ENCODE measurements at regions of chr2 and their contacts with region 1.

Region 1: GRCh38 chr2:111986116-111986900 is 68.8 kb upstream of the TMEM87B start:
- DNase-seq: no peak
- ATAC-seq: no peak
- H3K4me3 ChIP-seq: no peak overlapping the region
- H3K27ac ChIP-seq: no peak overlapping the region
- H3K4me1 ChIP-seq: no peaks in the 10 kb centered on the region
- H3K27me3 ChIP-seq: no peaks in the 10 kb centered on the region
- CTCF ChIP-seq: no peak

Region 2: GRCh38 chr2:111698743-111699554 is 287.4 kb before region 1 on chr2:
- intact Hi-C with region 1: no loop called
- DNase-seq: peak; percentile 31 to 49
- ATAC-seq: peak; percentile 71 to 93 (median 81)
- H3K4me3 ChIP-seq: no peak overlapping the region
- H3K27ac ChIP-seq: peak overlapping the region in 1 of 10 donors; percentile 86
- H3K4me1 ChIP-seq: peaks cover 0 to 55% (median 10%) of the 10 kb centered on the region in 9 donors
- H3K27me3 ChIP-seq: no peaks in the 10 kb centered on the region
- CTCF ChIP-seq: peak in 2 of 9 donors; percentile 9 to 12

Region 3: DNA sequence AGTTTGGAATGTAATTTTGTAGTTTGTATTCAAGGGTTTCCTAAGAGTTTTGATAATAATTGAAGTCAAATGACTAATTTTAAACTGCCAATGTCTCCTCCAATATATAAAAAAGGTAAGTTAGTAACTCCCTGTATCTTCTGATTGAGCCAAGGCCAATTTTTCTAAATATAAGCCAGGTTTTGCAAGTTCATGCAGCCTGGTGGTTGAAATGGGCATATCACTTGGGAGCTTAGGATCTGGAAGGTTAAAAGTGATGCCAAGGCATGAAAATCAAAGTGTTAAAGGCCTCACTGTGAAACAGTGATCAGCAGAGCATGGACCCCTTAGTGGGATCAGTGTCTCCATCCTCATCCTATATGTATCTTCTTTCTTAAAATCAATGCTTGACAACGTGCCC is 27.4 kb before region 1 on chr2:
- intact Hi-C with region 1: no loop called
- DNase-seq: no peak
- ATAC-seq: no peak
- H3K4me3 ChIP-seq: no peak overlapping the region
- H3K27ac ChIP-seq: peak overlapping the region in 4 of 10 donors; percentile 53 to 72 (median 60)
- H3K4me1 ChIP-seq: peaks cover 0 to 50% (median 22%) of the 10 kb centered on the region in 9 donors
- H3K27me3 ChIP-seq: no peaks in the 10 kb centered on the region
- CTCF ChIP-seq: peak in 2 of 9 donors; percentile 15 to 29

Region 4: DNA sequence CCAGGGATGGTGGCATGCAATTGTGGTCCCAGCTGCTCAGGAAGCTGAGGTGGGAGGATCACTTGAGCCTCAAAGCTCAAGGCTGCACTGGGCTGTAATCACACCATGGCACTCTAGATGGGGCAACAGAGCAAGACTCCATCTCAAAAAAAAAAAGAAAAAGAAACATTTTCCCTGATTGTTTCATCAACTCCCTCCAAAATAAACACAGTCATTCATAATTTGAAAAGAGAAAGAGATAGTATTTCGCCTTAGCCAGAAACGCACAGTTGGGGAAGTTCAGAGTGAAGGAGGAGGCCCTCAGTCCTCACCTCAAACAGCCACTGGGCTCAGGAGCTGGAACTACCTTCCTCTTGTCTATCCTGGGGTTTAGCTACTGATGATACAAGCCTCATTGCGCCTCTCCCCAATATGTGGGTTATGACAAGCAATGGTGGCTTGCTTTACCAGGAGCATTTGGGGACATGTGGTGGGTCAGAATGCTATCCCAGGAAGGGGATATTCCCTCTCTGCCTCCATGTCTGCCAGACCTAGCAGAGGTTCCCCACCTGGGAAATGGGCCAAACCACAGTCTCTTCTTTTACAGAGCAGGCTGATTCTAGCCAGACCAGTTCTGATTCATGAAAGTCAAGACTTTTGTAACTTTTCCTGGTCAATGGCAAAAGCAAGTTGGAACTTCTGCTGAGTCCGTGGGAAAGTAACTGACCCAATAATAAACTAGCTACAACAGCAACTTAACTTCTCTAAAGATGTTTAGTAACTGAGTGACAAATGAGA is 46.6 kb after region 1 on chr2:
- intact Hi-C with region 1: loop called in 1 of 10 experiments (anchors 10 kb)
- DNase-seq: peak in 1 of 2 donors; percentile 32
- ATAC-seq: peak in 7 of 8 donors; percentile 29 to 65 (median 56)
- H3K4me3 ChIP-seq: no peak overlapping the region
- H3K27ac ChIP-seq: peak overlapping the region in 3 of 10 donors; percentile 24 to 77 (median 25)
- H3K4me1 ChIP-seq: peaks cover 0 to 37% (median 11%) of the 10 kb centered on the region in 9 donors
- H3K27me3 ChIP-seq: no peaks in the 10 kb centered on the region
- CTCF ChIP-seq: peak in 2 of 9 donors; percentile 8 to 27